Calu3 (cell line): ENCODE measurements at regions of chr7 and their contacts with region 1.

Region 1: GRCh38 chr7:115113776-115114175 is 191.9 kb downstream of the MDFIC start:
- DNase-seq: peak; percentile 43
- H3K4me3 Mint-ChIP-seq: no peak overlapping the region
- H3K27ac Mint-ChIP-seq: peak overlapping the region; percentile 39
- H3K4me1 Mint-ChIP-seq: peaks cover 62% of the 10 kb centered on the region
- H3K27me3 Mint-ChIP-seq: no peaks in the 10 kb centered on the region
- CTCF ChIP-seq: no peak

Region 2: DNA sequence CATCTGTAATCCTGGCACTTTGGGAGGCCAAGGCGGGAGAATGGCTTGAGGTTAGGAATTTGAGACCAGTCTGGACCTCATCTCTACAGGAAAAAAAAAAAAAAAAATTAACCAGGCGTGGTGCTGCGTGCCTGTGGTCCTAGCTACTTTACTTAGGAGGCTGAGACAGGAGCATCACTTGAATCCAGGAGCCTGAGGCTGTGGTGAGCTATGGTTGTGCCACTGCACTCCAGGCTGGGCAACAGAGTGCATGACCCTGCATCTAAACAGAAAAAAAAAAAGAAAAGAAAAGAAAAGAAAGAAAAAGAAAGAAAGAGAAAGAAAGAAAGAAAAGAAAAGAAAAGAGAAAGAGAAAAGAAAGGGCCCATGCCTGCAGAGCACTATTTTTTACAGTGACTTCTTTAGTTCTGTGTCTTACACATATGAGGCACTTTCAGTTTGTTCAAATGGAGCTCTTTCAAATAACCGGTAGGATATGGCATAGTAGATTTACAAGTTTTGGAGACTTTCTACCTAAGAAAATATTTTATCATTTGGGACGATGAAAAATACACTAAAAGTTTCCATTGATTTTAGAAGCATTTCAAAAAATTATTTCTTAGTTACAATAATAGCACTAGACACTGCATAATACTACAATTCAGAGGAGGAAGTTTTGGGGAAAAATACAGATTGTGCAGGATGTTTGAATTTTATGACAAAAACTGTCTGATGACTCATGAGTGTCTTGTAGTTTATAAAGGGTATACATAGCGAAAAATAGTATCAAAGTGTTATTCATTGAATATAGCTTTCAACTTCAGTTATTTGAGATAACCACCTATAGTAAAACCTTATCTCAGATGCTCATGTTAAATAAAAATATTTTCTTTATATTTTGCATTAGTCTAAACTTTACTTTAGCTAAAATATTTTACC is 116.0 kb before region 1 on chr7:
- CTCF ChIA-PET with region 1: no interaction called
- intact Hi-C with region 1: no loop called
- DNase-seq: no peak
- H3K4me3 Mint-ChIP-seq: no peak overlapping the region
- H3K27ac Mint-ChIP-seq: no peak overlapping the region
- H3K4me1 Mint-ChIP-seq: peaks cover 2% of the 10 kb centered on the region
- H3K27me3 Mint-ChIP-seq: no peaks in the 10 kb centered on the region
- CTCF ChIP-seq: no peak

Region 3: DNA sequence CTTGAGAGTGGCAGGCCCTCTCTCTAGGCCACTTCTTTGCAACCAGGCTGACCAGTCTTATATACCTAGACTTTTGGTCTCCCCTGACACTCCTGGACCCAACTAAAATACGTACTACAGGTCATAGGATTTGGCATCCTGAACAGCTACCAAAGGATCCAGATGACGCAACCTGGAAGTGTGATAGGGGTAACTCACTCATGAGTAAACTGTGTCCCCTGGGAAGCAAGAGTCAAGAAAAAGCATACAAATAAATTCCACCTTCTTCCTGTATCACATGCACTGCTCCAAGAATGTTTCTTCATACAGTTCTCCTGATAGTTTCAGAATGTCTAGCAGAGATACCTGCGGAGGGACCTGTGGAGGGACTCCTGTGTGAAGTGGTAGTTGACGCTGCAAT is 19.6 kb before region 1 on chr7:
- CTCF ChIA-PET with region 1: no interaction called
- intact Hi-C with region 1: no loop called
- DNase-seq: no peak
- H3K4me3 Mint-ChIP-seq: no peak overlapping the region
- H3K27ac Mint-ChIP-seq: no peak overlapping the region
- H3K4me1 Mint-ChIP-seq: peaks cover 46% of the 10 kb centered on the region
- H3K27me3 Mint-ChIP-seq: no peaks in the 10 kb centered on the region
- CTCF ChIP-seq: no peak

Region 4: DNA sequence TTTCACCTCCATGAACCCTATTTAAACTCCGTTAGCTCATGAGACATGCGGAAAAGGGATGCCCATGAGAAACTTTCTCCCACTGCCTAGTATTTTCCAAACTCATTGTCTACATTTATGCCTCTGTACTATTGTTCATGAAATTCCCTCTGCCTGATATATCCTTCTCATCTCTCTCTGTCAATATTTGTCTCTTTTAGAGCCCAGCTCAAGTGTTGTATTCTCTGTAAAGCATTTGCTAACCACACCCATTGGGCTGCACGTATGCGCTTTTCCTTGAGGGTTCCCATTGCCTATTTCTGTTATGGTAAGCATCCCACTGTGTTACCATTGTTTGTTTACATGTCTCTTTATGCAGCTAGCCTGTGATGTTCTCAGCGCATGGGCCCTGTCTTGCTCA is 19.5 kb after region 1 on chr7:
- CTCF ChIA-PET with region 1: no interaction called
- intact Hi-C with region 1: loop called (anchors 1 kb)
- DNase-seq: no peak
- H3K4me3 Mint-ChIP-seq: no peak overlapping the region
- H3K27ac Mint-ChIP-seq: no peak overlapping the region
- H3K4me1 Mint-ChIP-seq: peaks cover 27% of the 10 kb centered on the region
- H3K27me3 Mint-ChIP-seq: no peaks in the 10 kb centered on the region
- CTCF ChIP-seq: no peak

Region 5: DNA sequence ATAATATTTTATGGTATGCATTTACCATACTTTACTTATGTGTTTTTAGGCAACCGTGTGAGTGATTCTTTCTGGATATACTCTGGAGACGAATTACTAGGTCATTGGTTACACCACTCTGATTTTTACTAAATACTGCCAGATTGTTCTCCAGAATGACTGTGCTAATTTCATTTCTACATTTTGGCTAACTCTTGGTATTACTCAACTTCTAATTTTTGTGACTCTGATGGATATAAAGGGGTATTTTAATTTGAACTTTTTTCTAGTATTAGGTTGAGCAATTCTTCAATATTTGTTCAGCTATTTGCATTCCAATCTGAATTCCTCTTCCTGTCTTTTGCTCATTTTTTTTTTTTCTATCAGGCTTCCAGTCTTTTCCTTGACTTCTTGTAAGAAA is 31.7 kb after region 1 on chr7:
- CTCF ChIA-PET with region 1: interaction called, 5 read pairs
- intact Hi-C with region 1: loop called (anchors 5 kb)
- DNase-seq: no peak
- H3K4me3 Mint-ChIP-seq: peak overlapping the region; percentile 36
- H3K27ac Mint-ChIP-seq: peak overlapping the region; percentile 92
- H3K4me1 Mint-ChIP-seq: peaks cover 15% of the 10 kb centered on the region
- H3K27me3 Mint-ChIP-seq: no peaks in the 10 kb centered on the region
- CTCF ChIP-seq: no peak